Natural killer cell (primary cell): ENCODE measurements at regions of chr13 and their contacts with region 1.

Region 1: DNA sequence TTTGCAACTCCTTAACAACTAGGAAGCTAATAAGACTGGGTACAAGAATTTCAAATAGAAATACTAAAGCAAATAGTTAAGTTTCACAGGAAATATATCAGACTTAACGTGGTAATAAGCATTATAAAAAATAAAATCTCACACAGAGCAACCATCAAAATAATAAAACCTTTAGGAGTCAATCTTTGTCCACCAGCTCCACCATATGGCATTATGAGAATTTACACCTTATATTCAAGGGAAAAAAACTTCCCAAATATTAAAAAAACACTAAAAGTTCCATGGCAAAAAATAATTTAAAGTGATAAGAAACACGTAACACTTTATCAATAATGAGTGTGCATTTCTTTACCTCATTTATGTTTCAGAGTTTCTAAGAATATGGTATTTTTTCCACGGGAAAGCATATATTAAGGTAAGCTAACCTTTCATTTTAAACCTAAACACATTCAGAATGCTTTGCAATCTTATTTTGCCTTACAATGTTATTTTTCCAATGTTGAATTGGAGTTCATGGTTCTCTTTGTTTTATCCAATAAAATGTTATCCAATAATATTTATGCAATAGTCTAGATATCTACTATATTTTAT is 423.2 kb upstream of the SGCG start:
- DNase-seq: no peak
- ATAC-seq: no peak
- H3K4me3 ChIP-seq: no peak overlapping the region
- H3K4me3 Mint-ChIP-seq: no peak overlapping the region
- H3K27ac ChIP-seq: no peak overlapping the region
- H3K27ac Mint-ChIP-seq: no peak overlapping the region
- H3K4me1 ChIP-seq: no peaks in the 10 kb centered on the region
- H3K4me1 Mint-ChIP-seq: no peaks in the 10 kb centered on the region
- H3K27me3 ChIP-seq: no peaks in the 10 kb centered on the region
- H3K27me3 Mint-ChIP-seq: no peaks in the 10 kb centered on the region
- CTCF ChIP-seq: no peak

Region 2: DNA sequence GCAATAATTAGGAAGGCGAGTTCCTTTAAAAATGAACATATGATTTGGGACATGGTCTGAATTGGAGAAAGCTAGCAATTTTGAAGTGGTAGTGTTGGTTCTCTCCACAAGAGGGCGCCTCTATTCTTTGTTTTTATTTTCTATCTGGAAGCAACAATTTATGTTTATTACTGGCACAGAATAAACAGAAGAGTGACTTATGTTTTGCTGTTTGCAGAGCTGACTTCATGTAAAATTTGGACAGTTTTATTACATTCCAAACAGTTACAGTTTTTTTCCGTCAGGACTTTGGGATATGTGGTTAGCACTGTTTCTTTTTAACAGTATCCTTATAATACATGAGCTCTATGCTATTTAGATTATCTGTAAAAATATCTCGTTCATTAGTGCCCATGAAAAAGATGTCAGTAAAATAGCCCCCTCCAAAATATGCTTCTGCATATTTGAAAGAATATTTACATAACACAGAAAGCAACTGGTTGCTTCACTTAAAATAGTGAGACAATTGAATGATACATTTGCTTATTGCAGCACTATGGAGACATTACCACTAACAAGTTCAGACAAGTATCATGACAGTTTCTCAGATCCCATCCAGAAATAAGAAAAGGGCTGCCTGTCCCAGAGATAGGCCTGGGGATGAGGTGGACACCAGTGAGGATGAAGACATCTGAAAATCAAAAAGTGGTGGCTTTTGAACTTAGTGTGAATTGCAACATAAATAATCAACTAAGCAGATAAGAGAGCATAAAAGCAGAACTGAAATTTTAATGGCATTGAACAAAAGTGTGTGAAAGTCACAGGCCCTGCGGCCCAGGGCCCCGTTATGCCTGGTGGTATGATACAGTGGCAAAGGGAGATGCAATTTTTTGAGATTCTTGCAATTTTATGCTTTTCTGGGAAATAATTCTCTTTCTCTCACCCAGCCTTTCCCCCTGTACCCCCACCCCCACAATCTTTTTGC is 1119.0 kb before region 1 on chr13:
- intact Hi-C with region 1: loop called (anchors 10 kb)
- DNase-seq: peak in 1 of 2 donors; percentile 68
- ATAC-seq: peak; percentile 36 to 66 (median 49)
- H3K4me3 ChIP-seq: no peak overlapping the region
- H3K4me3 Mint-ChIP-seq: no peak overlapping the region
- H3K27ac ChIP-seq: no peak overlapping the region
- H3K27ac Mint-ChIP-seq: no peak overlapping the region
- H3K4me1 ChIP-seq: no peaks in the 10 kb centered on the region
- H3K4me1 Mint-ChIP-seq: peaks cover 0 to 9% of the 10 kb centered on the region in 2 donors
- H3K27me3 ChIP-seq: no peaks in the 10 kb centered on the region
- H3K27me3 Mint-ChIP-seq: peaks cover 5 to 27% of the 10 kb centered on the region in 2 donors
- CTCF ChIP-seq: peak; percentile 92

Region 3: DNA sequence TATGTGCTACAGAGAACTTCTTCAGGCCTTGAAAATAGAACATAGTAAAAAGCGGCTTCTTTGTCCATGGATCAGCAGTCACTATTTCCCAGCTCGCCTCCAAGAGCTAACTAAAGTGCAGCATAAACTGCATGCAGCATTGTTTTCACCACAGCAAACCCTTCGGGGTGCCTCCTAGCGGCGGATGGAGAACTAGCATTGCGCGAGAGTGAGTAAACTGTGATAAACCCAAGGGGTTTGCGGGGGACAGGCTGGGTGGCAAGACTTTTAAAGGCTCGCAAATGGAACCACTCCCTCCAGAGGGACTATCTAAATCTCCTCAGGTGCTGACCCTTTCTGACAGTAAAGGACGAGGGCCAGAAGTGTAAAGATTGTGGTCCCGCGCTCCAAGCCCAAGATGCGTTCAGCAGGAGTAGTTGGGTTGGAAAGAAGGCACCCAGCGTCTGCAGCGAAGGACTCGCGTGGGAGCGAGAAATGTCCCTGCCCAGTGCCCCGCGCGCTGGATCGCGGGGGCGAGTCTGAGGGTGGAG is 401.7 kb after region 1 on chr13:
- intact Hi-C with region 1: no loop called
- DNase-seq: peak in 1 of 2 donors; percentile 4
- ATAC-seq: no peak
- H3K4me3 ChIP-seq: no peak overlapping the region
- H3K4me3 Mint-ChIP-seq: no peak overlapping the region
- H3K27ac ChIP-seq: no peak overlapping the region
- H3K27ac Mint-ChIP-seq: no peak overlapping the region
- H3K4me1 ChIP-seq: no peaks in the 10 kb centered on the region
- H3K4me1 Mint-ChIP-seq: no peaks in the 10 kb centered on the region
- H3K27me3 ChIP-seq: no peaks in the 10 kb centered on the region
- H3K27me3 Mint-ChIP-seq: peaks cover 12 to 14% of the 10 kb centered on the region in 2 donors
- CTCF ChIP-seq: no peak

Region 4: GRCh38 chr13:23447927-23448326 is 690.3 kb after region 1 on chr13:
- intact Hi-C with region 1: no loop called
- DNase-seq: no peak
- ATAC-seq: no peak
- H3K4me3 ChIP-seq: no peak overlapping the region
- H3K4me3 Mint-ChIP-seq: no peak overlapping the region
- H3K27ac ChIP-seq: no peak overlapping the region
- H3K27ac Mint-ChIP-seq: no peak overlapping the region
- H3K4me1 ChIP-seq: no peaks in the 10 kb centered on the region
- H3K4me1 Mint-ChIP-seq: no peaks in the 10 kb centered on the region
- H3K27me3 ChIP-seq: no peaks in the 10 kb centered on the region
- H3K27me3 Mint-ChIP-seq: peaks cover 0 to 12% of the 10 kb centered on the region in 2 donors
- CTCF ChIP-seq: no peak